HEK293 (cell line): ENCODE measurements at regions of chr10 and their contacts with region 1.

Region 1: GRCh38 chr10:97914837-97915211 is 65.2 kb downstream of the GOLGA7B start:
- H3K4me3 ChIP-seq: no peak overlapping the region
- H3K27ac ChIP-seq: no peak overlapping the region
- H3K4me1 ChIP-seq: no peaks in the 10 kb centered on the region
- CTCF ChIP-seq: peak; percentile 91

Region 2: GRCh38 chr10:97904018-97904381 is 10.8 kb before region 1 on chr10:
- CTCF ChIA-PET with region 1: interaction called, 17 read pairs
- POLR2A ChIA-PET with region 1: no interaction called
- H3K4me3 ChIP-seq: no peak overlapping the region
- H3K27ac ChIP-seq: no peak overlapping the region
- H3K4me1 ChIP-seq: no peaks in the 10 kb centered on the region; the same call in 1 of the 2 replicates
- CTCF ChIP-seq: no peak

Region 3: DNA sequence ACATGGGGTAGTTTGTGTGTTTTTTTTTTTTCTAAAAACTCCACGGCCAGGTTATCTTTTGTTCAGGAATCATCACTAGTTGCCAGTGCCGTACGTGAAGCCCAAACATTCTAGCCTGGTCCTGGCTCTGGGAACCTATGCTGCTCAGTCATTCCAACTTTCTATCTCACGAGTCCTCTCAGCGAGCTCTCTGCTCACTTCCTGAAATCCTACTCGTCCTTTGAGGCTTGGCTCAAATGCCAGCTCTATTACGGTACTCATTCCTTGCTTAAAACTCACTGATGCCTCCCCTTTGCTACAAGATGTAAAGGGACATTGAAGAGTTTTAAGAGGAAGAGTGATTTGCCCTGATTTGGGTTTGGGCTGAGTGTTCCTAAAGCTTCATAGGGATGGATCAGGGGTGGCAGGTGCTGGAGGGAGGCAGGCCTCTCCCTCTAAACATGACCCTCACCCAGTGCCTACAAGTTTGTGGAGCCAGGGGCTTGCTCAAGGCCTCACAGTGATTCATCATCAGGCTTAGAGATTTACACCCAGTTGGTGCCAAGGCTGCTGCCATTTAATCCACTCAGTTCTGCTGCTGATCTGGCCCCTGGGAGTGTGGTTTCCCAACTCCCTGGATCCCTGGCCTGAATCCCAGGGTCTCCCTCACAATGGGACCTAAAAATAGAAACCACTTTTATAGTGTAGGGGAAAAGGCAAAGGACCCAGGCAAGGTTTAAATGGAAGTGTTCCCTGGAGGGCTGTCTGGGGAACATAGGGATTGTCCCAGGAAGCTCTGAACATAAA is 173.6 kb after region 1 on chr10:
- CTCF ChIA-PET with region 1: no interaction called
- POLR2A ChIA-PET with region 1: no interaction called
- H3K4me3 ChIP-seq: no peak overlapping the region
- H3K27ac ChIP-seq: no peak overlapping the region
- H3K4me1 ChIP-seq: no peaks in the 10 kb centered on the region
- CTCF ChIP-seq: no peak